Ovary (tissue), 10 donors: ENCODE measurements at regions of chr15 and their contacts with region 1.

Region 1: DNA sequence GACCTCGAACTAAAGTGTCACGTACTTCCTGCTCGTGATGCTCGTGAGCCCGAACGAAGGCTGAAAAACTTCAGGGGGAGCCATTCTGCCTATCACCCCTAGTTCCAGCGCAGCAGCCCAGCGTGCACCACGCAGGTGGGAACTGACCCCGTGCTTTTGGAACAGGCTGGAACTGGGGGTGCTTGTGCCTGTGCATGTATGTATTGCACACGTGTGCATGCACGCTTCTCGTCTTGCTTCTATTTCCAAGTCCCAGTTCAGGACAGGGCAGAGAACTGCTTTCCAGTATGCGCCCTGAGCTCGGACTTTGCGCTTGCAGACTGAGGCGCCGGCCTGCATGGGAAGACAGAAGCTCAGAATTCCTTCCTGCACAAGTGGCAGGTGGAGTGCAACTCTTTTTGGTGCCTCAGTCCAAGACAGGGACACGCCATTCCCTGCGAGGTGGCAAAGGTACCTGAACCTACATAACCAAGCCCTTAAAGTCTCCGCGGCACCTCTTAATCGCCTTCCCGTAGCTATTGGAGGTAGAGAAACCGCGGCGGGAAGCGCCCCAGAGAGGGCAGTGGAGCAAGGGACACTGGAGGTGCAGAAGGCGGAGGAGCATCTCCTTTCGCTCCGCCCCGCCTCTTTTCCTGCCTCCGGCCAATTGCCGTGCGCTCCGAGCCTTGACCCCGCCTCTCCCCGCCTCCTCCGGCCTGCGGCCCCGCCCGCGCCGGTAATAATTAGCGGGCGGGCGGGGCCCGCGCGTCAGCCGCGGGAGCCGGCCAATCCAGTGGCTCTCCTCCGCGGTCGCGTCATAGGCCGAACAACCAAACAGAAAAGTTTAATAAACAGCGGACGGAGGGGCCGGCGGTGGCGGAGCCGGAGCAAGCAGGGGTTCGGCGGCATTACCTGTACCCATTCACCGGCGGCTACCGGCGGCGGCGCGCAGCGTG is at the start of gene ZFAND6:
- DNase-seq: peak; percentile 93 to 97 (median 96)
- H3K4me3 ChIP-seq: peak within 1 kb of the TSS; percentile 52
- H3K27ac ChIP-seq: peak within 1 kb of the TSS; percentile 46 to 91
- H3K4me1 ChIP-seq: peaks cover 2% of the 10 kb centered on the region
- H3K27me3 ChIP-seq: no peaks in the 10 kb centered on the region
- CTCF ChIP-seq: peak in 1 of 3 donors; percentile 19
- EP300 ChIP-seq: no peak
- POLR2A ChIP-seq: peak; percentile 85
- total RNA-seq, gene ZFAND6: 57.3 to 105 (median 70.3) TPM

Region 2: GRCh38 chr15:80031841-80032240 is 27.3 kb before region 1 on chr15:
- intact Hi-C with region 1: no loop called
- DNase-seq: no peak
- H3K4me3 ChIP-seq: no peak overlapping the region
- H3K27ac ChIP-seq: no peak overlapping the region
- H3K4me1 ChIP-seq: peaks cover 2% of the 10 kb centered on the region
- H3K27me3 ChIP-seq: no peaks in the 10 kb centered on the region
- CTCF ChIP-seq: no peak
- EP300 ChIP-seq: no peak
- POLR2A ChIP-seq: no peak

Region 3: GRCh38 chr15:80152180-80152845 is 93.2 kb after region 1 on chr15:
- intact Hi-C with region 1: loop called in 1 of 4 experiments (anchors 5 kb)
- DNase-seq: peak; percentile 96 to 99 (median 98)
- H3K4me3 ChIP-seq: peak overlapping the region; percentile 73
- H3K27ac ChIP-seq: peak overlapping the region; percentile 47 to 88
- H3K4me1 ChIP-seq: peaks cover 1% of the 10 kb centered on the region
- H3K27me3 ChIP-seq: no peaks in the 10 kb centered on the region
- CTCF ChIP-seq: no peak
- EP300 ChIP-seq: no peak
- POLR2A ChIP-seq: no peak

Region 4: DNA sequence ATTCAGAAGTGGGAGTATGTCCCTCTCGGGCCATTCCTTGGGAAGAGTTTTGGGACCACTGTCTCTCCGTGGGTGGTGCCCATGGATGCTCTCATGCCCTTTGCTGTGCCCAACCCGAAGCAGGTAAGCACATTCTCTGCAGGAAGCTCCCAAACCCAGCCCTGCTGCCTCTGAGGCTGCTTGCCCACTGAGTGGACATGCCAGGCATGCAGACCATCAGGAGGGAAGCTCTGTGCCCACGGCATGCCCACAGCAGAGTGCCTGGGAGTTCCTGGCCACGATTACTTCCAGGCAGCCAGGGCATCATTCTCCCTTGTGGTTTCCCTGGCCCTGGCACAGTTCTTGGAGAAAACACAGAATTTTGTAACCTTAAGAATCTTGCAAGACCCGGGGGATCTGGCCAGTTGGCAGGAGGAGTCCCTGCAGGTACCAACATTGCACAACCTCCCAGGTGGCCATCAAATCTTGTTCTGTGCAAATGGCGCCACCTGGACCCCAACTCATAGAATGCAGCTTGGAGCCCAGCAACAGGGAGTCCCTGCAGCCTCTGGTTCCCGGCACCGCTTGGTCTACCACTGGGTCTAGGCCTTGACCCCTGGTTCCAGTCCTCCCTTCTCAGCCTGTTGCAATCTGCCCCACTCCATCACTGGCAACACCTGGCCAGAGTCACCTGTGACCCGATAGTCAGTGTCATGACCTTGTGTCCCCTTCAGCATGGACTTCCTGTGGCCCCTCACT is 114.1 kb after region 1 on chr15:
- intact Hi-C with region 1: loop called in 1 of 4 experiments (anchors 10 kb)
- DNase-seq: peak; percentile 28 to 75 (median 66)
- H3K4me3 ChIP-seq: no peak overlapping the region
- H3K27ac ChIP-seq: no peak overlapping the region
- H3K4me1 ChIP-seq: no peaks in the 10 kb centered on the region
- H3K27me3 ChIP-seq: no peaks in the 10 kb centered on the region
- CTCF ChIP-seq: peak; percentile 26 to 63 (median 36)
- EP300 ChIP-seq: no peak
- POLR2A ChIP-seq: no peak